T-cell (primary cell): ENCODE measurements at regions of chr14 and their contacts with region 1.

Region 1: DNA sequence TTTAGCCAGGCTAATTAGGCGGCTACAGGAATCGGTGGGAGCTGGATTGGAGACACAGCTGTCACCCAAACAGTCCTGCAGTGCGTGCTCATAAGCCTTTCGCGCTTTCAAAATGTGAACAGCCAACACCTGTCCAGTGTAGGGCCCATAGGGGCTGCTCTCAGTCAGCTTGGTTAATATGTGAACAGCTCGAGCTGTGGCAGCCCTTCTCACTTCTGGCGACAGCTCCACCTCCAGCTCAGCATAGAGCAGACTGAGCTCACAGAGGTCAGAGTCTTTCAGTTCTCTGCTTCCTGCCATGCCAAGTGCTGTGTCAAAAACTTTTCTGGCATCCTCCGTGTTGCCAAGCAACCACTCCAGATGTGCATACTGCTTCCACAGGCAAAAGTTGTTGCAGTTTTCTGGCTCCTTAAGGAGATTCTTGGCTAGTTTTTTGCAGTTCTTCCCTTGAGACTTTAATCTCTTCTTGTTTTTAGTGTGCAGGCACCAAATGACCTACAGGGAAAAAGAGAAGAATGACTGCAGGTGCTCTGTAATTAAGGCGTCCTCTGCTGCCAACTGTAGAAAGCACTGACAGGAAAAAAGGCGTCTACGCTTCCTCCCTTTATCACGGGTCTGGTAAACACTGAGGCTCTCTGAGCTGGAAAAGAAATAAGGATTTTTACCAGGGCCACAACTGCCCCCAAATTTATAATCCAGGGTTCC is 32.5 kb downstream of the PSMC1 start:
- DNase-seq: no peak
- ATAC-seq: no peak
- H3K4me3 ChIP-seq: no peak overlapping the region
- H3K4me3 Mint-ChIP-seq: no peak overlapping the region
- H3K27ac ChIP-seq: no peak overlapping the region
- H3K27ac Mint-ChIP-seq: no peak overlapping the region
- H3K4me1 ChIP-seq: no peaks in the 10 kb centered on the region
- H3K4me1 Mint-ChIP-seq: peaks cover 0 to 3% (median 0%) of the 10 kb centered on the region in 3 donors
- H3K27me3 ChIP-seq: no peaks in the 10 kb centered on the region
- H3K27me3 Mint-ChIP-seq: no peaks in the 10 kb centered on the region

Region 2: DNA sequence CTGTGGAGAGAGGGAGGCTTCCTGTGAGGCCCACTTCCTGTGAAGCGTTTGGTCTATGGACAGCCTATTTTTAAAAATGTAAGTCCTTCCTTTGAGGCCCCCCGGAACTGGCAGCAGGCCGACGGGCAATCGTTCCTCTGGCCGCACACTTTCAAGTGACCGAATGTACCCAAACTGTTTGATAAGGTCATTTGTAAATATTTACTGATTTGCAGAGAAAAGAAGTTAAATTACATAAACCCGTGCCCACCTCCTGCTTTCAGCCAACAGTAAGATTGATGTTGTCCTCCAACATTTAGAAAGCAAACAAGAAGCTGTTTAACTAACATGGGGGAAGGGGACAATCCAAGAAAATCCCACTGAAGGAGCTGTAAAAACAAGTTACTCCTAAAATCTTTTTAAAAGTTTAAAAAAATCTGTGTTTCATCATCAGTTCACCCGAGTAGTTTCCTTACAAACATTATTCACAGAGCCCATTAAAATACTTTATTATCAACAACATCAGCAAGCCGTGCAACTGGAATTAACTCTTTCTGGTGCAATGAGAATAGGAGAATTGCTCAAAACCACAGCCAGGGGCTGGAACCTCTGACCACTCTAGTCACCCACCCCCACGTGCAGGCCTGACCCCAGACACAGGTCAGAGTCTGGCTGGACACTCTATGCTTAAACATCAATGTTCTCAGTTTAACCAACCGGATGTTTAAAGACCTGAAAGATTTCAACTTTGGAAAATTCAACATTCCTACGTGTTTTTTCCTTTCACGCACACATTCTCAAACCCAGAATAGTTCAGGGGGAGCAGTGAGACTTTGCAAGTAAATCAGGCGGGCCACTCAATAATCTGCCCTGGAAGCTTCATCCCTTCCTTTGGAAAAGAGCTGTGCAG is 937.0 kb before region 1 on chr14:
- CTCF ChIA-PET with region 1: no interaction called
- POLR2A ChIA-PET with region 1: interaction called in 1 of 2 experiments, 10 read pairs
- DNase-seq: peak in 5 of 35 experiments; percentile 9 to 39 (median 17)
- ATAC-seq: peak in 3 of 4 experiments; percentile 48 to 81 (median 69)
- H3K4me3 ChIP-seq: peak overlapping the region in 1 of 2 donors; percentile 51
- H3K4me3 Mint-ChIP-seq: peak overlapping the region; percentile 63 to 77 (median 72)
- H3K27ac ChIP-seq: peak overlapping the region; percentile 50
- H3K27ac Mint-ChIP-seq: peak overlapping the region; percentile 93 to 96
- H3K4me1 ChIP-seq: peaks cover 20 to 28% of the 10 kb centered on the region in 2 experiments
- H3K4me1 Mint-ChIP-seq: peaks cover 64 to 66% (median 65%) of the 10 kb centered on the region in 3 donors
- H3K27me3 ChIP-seq: no peaks in the 10 kb centered on the region
- H3K27me3 Mint-ChIP-seq: no peaks in the 10 kb centered on the region

Region 3: DNA sequence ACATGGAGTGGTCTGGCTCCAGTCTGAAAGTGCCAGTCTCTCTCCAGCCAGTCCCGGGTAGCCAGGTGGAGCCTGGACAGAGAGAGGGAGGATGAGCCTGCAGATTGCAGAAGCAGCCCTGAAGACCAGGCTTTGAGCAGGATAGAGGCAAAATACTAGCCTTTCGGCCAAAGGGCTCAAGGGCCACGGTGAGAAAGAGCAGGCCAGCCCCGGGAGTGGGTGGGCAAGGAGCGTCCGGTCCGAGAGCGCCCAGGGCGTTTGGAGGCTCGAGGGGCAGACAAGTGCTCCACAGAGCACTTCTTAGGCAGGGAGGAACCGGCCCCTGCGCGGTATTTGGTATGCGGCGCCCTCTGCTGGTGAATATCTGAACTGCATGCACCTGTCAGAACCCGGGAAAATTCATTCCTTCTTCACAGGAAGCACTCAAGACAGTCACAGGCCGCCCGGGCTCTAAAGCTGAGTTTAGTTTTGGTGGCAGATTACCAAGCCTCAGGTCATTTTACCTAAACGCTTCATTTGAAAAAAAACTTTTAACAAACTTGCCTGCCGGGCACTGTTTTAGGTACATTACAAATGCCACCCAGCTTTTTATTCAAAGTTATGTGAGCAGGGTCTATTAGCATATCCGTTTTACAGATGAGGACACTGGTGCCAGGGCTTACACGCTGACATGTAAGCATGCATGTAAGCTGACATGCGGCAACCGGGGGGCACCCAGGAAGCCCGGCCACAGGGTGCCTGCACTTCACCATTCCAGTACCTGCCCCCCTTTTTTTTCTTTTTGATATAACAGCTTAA is 53.4 kb before region 1 on chr14:
- CTCF ChIA-PET with region 1: no interaction called
- POLR2A ChIA-PET with region 1: no interaction called
- DNase-seq: peak in 32 of 35 experiments; percentile 8 to 68 (median 46)
- ATAC-seq: peak; percentile 52 to 70 (median 62)
- H3K4me3 ChIP-seq: no peak overlapping the region
- H3K4me3 Mint-ChIP-seq: no peak overlapping the region
- H3K27ac ChIP-seq: no peak overlapping the region
- H3K27ac Mint-ChIP-seq: no peak overlapping the region
- H3K4me1 ChIP-seq: peaks cover 0 to 4% of the 10 kb centered on the region in 2 experiments
- H3K4me1 Mint-ChIP-seq: peaks cover 0 to 10% (median 2%) of the 10 kb centered on the region in 3 donors
- H3K27me3 ChIP-seq: peaks cover 0 to 29% of the 10 kb centered on the region in 2 experiments
- H3K27me3 Mint-ChIP-seq: peaks cover 20 to 22% of the 10 kb centered on the region in 2 donors

Region 4: GRCh38 chr14:91568626-91569025 is 1279.8 kb after region 1 on chr14:
- CTCF ChIA-PET with region 1: no interaction called
- POLR2A ChIA-PET with region 1: no interaction called
- DNase-seq: no peak
- ATAC-seq: no peak
- H3K4me3 ChIP-seq: no peak overlapping the region
- H3K4me3 Mint-ChIP-seq: no peak overlapping the region
- H3K27ac ChIP-seq: no peak overlapping the region
- H3K27ac Mint-ChIP-seq: no peak overlapping the region
- H3K4me1 ChIP-seq: peaks cover 3 to 4% of the 10 kb centered on the region in 2 experiments
- H3K4me1 Mint-ChIP-seq: peaks cover 0 to 6% (median 6%) of the 10 kb centered on the region in 3 donors
- H3K27me3 ChIP-seq: peaks cover 0 to 21% of the 10 kb centered on the region in 2 experiments
- H3K27me3 Mint-ChIP-seq: peaks cover 9 to 16% of the 10 kb centered on the region in 2 donors